ENCODE measurements at regions of chr6 and their contacts with region 1.

Region 1: DNA sequence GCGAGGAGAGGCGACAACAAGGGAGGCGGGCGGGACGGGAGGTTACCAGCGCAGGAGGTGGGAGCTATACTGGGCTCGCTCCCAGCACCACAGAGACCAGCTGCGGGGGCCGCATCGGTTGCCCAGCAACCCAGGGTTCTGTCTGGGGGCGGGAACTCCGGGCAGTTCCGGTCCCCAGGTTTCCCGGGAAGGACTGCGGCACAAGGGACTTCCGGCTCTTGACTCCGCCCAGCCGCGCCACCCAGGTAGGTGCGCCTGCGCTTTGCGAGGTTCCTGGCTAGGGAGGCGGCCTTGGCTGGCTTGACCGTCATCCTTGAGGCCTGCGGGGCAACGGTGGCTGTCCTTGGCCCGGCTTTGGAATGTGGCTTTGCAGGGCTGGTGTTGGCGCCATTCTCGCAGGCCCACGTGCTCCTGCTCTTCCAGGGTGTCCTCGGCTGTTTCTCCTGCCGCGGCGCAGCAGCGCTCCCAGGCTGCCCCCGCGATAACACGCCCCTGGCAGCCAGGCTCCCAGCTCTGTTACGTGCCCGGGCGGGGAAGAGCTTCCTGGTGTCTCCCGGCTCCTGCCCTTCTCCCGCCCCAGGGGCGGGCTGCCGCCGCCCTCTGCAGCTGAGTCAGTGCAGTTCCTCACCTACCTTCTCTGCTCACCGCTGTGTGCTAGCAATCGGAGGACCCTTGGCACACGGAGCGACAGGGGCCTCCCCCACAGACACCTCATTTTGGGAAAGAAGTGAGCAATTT is at the start of gene RSPH3:
- DNase-seq: peak; percentile 86
- H3K4me3 Mint-ChIP-seq: peak within 1 kb of the TSS; percentile 95
- H3K27ac Mint-ChIP-seq: peak within 1 kb of the TSS; percentile 91
- H3K4me1 Mint-ChIP-seq: peaks cover 52% of the 10 kb centered on the region
- H3K27me3 Mint-ChIP-seq: peaks cover 2% of the 10 kb centered on the region
- total RNA-seq, gene RSPH3: 3.8 and 4.2 TPM in 2 replicates

Region 2: GRCh38 chr6:158270389-158271127 is 729.3 kb before region 1 on chr6:
- intact Hi-C with region 1: no loop called
- DNase-seq: no peak
- H3K4me3 Mint-ChIP-seq: peak overlapping the region; percentile 20
- H3K27ac Mint-ChIP-seq: no peak overlapping the region
- H3K4me1 Mint-ChIP-seq: peaks cover 33% of the 10 kb centered on the region
- H3K27me3 Mint-ChIP-seq: no peaks in the 10 kb centered on the region

Region 3: DNA sequence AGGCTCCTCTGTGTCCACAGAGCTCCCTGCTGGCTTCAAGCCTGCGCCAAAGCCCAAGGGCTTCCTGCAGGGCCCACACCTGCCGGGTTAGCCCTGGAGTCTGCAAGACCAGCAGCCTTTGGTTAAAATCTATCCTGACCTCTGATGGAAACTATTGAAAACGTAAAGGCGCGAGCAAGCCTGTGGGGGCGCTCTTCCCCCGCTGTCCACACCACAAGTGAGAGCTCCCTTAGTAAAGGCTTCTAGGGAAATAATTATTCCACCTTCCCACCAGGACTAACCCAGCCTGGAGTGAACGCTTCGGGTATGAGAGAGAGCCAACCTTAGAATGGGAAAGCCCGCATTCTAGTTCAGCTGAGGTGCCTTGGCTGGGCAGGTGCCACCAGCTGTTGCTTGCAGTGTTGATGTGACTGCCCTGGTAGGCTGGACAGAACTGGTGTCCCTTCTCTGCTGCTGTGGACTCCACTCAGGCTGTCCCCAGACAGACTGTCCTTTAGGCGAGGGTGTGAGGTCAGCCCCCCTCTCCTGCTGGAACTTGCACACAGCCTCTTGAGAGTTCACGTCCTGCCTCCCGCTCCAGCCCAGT is 281.3 kb before region 1 on chr6:
- intact Hi-C with region 1: loop called (anchors 1 kb)
- DNase-seq: no peak
- H3K4me3 Mint-ChIP-seq: no peak overlapping the region
- H3K27ac Mint-ChIP-seq: no peak overlapping the region
- H3K4me1 Mint-ChIP-seq: peaks cover 69% of the 10 kb centered on the region
- H3K27me3 Mint-ChIP-seq: peaks cover 2% of the 10 kb centered on the region

Region 4: GRCh38 chr6:158808941-158809678 is 190.7 kb before region 1 on chr6:
- intact Hi-C with region 1: no loop called
- DNase-seq: no peak
- H3K4me3 Mint-ChIP-seq: no peak overlapping the region
- H3K27ac Mint-ChIP-seq: no peak overlapping the region
- H3K4me1 Mint-ChIP-seq: peaks cover 95% of the 10 kb centered on the region
- H3K27me3 Mint-ChIP-seq: no peaks in the 10 kb centered on the region

Region 5: GRCh38 chr6:158853072-158853871 is 146.6 kb before region 1 on chr6:
- intact Hi-C with region 1: loop called (anchors 2 kb)
- DNase-seq: peak; percentile 85
- H3K4me3 Mint-ChIP-seq: no peak overlapping the region
- H3K27ac Mint-ChIP-seq: no peak overlapping the region
- H3K4me1 Mint-ChIP-seq: peaks cover 20% of the 10 kb centered on the region
- H3K27me3 Mint-ChIP-seq: no peaks in the 10 kb centered on the region

Region 6: DNA sequence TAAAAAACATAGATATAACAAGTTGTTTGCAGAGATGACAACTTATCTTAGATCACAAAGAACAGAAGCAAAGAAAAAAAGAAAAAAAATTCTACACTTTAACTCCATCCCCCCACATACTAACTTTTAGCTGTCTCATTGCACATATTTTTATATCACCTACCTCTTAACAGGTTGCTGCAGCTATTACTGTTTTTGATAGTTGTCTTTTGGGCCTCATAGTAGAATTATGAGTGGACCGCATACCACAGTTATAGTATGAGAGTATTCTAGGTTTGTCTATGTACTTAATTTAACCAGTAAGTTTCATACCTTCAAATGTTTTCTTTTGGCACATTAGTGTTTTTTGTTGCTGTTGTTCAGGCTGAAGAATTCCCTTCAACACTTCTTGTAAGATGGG is 12.2 kb before region 1 on chr6:
- intact Hi-C with region 1: loop called (anchors 1 kb)
- DNase-seq: no peak
- H3K4me3 Mint-ChIP-seq: no peak overlapping the region
- H3K27ac Mint-ChIP-seq: no peak overlapping the region
- H3K4me1 Mint-ChIP-seq: peaks cover 23% of the 10 kb centered on the region
- H3K27me3 Mint-ChIP-seq: no peaks in the 10 kb centered on the region

Region 7: DNA sequence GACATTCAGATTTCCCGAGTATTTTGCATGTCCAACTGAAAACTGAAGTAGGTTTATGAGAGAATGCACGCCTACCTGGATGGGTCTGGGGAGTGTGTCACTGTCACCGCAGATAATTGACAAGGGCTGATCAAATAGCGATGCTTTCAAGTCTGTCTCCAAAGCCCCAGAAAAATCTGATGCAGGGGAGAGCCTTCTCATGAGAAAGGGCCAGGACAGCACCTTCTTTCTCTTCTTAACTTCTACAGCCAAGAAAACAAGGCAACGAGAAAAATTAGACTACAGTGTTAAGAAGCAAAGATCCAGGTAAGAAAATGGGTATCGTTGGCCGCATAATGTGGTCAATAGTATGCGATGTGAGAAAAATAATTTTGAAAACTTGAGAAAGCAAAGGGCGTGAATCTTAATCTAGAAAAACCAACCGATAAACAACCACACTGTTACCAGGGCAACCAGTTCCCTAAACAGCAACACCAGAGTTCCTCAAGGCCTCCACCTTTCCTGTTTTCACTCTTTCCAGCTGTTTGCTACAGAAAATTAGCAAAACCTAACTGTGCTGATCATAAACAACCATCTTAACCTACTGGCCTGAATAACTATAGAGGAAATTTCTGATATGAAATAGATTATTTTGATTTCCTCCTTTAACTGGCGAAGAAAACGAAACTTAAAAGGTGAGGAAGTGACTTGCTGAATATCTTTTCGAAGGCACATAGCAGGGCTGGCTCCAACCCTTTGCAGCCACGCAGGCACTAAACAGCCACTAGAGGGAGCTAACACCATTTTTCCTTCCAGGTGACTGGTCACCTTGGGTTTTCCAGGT is 42.4 kb after region 1 on chr6:
- intact Hi-C with region 1: loop called (anchors 1 kb)
- DNase-seq: peak; percentile 74
- H3K4me3 Mint-ChIP-seq: peak overlapping the region; percentile 91
- H3K27ac Mint-ChIP-seq: peak overlapping the region; percentile 90
- H3K4me1 Mint-ChIP-seq: peaks cover 68% of the 10 kb centered on the region
- H3K27me3 Mint-ChIP-seq: no peaks in the 10 kb centered on the region

Region 8: DNA sequence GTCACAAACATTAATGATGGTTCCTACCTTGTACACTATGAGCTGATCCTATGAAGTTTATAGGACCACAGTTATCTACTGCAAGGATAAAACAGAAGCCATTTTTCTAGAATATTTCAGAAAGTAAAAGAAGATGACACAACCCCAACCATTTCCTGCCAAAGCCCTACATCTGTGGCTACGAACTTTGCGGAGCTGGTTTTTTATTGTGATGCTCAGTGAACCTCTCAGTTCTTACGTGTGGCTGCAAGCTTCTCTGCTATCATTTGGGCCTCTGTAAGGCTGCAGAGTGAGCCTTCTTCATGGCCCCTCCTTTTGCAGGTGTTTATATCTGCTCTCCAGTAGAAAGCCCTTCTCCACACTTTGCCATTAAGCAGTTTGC is 62.7 kb after region 1 on chr6:
- intact Hi-C with region 1: no loop called
- DNase-seq: peak; percentile 70
- H3K4me3 Mint-ChIP-seq: peak overlapping the region; percentile 67
- H3K27ac Mint-ChIP-seq: peak overlapping the region; percentile 93
- H3K4me1 Mint-ChIP-seq: peaks cover 92% of the 10 kb centered on the region
- H3K27me3 Mint-ChIP-seq: peaks cover 2% of the 10 kb centered on the region

Region 9: DNA sequence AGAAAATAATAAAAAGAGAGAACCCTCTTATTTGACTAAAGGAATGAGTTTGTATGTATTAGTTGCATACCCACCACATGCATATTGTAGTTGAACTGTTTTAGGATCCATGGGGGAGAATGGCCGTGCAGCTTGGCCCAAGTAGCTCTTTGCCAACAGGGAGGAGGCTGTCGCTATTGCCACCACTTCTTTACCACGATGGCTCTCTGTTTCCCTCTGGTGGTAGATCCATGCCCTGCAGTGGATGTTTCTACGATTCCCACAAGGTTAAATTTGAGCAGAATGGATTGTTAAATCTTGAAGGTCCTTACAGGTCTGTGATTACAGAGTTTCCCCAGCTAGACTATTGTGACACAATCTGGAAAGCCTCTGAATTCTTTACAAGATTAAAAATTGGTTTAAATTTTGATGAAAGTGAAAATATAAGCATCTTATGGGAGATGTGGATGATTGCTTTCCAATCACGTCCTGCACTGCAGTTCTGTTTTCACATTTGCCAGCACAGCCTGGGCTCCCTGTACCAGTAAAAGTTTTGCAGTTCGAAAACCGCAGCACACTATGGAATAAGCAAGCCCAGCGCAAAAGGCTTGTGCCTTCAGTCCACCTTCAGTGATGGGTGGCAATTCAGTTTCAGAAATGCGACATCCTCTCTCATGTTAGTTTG is 135.0 kb after region 1 on chr6:
- intact Hi-C with region 1: loop called (anchors 2 kb)
- DNase-seq: peak; percentile 67
- H3K4me3 Mint-ChIP-seq: no peak overlapping the region
- H3K27ac Mint-ChIP-seq: no peak overlapping the region
- H3K4me1 Mint-ChIP-seq: peaks cover 10% of the 10 kb centered on the region
- H3K27me3 Mint-ChIP-seq: peaks cover 10% of the 10 kb centered on the region

Measured in activated T-helper 1 cell treated with anti-CD3 and anti-CD28 coated beads, Interleukin-12 subunit alpha, Interleukin-12 subunit beta, Interleukin-2, Interleukin-4 antibody, amounts not matched to agents 30 ng/mL and 10 ng/mL and 1 ng/mL, durations not matched to agents 14 hours and 24 hours and 36 hours (primary cell).